Ascending aorta (tissue), 2 donors: ENCODE measurements at regions of chr1 and their contacts with region 1.

Region 1: DNA sequence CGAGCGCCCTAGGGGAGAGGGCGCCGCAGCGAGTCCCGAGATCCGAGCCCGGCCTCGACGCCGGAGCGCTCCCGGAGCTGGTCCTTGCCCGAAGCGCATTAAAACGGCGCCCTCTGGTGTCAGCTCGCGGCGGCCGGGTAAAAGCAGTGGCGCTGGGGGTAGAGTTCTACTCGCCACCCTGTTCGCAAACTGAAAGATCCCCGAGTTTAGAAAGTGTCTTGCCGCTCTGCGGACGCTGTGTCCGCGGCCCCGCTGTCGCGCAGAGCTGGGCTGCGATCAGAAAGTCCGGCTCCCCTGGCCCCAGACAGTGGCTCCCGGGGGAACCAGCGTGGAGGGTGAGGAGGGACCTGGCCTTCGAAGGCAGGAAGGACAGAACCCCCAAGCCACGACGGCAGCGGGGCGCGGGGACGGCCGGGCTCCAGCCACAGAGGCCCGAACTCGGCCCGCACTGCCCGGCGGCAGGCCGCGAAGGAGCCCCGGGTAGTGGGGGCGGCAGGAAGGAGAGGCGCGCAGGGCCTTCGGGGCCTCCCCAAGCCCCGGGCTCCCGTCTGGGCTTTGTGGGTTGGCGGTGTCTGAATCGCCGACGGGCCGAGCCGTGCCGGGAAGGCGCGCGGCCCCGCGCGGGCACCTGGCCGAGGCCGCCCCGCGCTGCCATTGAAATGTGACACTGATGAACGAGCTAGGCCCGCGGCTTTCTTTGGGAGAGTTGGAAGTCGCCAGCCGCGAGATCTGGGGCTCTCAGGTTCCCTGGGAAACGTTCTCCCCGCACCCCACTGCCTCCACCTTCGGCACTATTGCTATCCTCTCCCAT is 39.1 kb upstream of the NFIA start:
- DNase-seq: peak; percentile 38 to 94
- H3K4me3 ChIP-seq: peak overlapping the region; percentile 58 to 83
- H3K27ac ChIP-seq: peak overlapping the region; percentile 93 to 98
- H3K4me1 ChIP-seq: no peaks in the 10 kb centered on the region
- H3K27me3 ChIP-seq: no peaks in the 10 kb centered on the region
- CTCF ChIP-seq: peak; percentile 92 to 95 (median 92)

Region 2: DNA sequence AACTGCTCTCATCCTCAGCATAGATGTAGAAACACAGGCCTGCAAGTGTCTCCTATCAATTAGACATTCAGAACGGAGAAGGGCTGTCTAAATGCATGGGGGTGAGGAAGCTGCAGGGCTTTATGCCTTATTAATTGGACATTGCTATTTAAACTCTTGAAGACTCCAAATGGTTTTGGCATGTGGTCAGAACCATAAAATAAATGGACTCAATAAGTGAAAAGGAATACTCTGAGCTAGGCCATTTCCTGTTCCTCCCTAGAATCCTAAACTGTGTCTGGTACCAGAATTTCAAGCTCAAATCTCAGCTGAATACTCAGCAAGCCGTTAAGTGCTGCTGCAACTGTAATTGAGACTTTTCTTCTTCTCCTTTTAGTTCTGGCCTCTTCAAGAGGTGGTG is 889.3 kb before region 1 on chr1:
- intact Hi-C with region 1: loop called (anchors 5 kb)
- DNase-seq: no peak
- H3K4me3 ChIP-seq: no peak overlapping the region
- H3K27ac ChIP-seq: no peak overlapping the region
- H3K4me1 ChIP-seq: peaks cover 0 to 3% of the 10 kb centered on the region in 2 donors
- H3K27me3 ChIP-seq: no peaks in the 10 kb centered on the region
- CTCF ChIP-seq: no peak

Region 3: DNA sequence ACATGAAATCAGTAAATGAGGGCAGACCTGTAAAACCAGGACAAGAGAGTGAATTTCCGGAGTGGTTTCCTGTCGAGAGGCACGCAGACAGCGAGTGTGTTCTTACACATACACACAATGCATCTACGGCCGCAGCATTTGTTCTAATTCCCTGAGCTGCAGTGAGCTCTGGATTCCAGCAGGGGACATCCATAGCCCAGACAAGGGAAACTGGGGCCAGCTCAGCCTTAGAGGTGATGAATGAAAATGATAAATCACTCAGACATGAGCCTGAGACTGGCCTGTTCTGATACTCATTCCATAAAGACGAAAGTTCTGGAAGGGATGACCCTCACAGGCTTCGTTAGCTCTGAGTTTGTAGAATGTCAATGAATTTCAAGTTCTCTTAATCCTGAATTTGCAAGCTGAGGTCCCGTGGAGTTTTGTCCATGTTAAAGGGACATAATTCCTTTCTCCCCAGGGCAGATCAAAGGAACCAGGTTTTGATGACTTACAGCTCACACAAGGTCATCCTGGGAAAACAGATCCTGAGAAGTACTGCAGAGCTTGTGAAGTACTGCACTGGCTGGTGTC is 761.8 kb before region 1 on chr1:
- intact Hi-C with region 1: loop called (anchors 2 kb)
- DNase-seq: peak in 1 of 2 donors; percentile 79
- H3K4me3 ChIP-seq: no peak overlapping the region
- H3K27ac ChIP-seq: no peak overlapping the region
- H3K4me1 ChIP-seq: peaks cover 0 to 10% of the 10 kb centered on the region in 2 donors
- H3K27me3 ChIP-seq: no peaks in the 10 kb centered on the region
- CTCF ChIP-seq: peak; percentile 80 to 97 (median 96)

Region 4: GRCh38 chr1:60848583-60849188 is 194.5 kb before region 1 on chr1:
- intact Hi-C with region 1: loop called (anchors 5 kb)
- DNase-seq: no peak
- H3K4me3 ChIP-seq: no peak overlapping the region
- H3K27ac ChIP-seq: no peak overlapping the region
- H3K4me1 ChIP-seq: no peaks in the 10 kb centered on the region
- H3K27me3 ChIP-seq: no peaks in the 10 kb centered on the region
- CTCF ChIP-seq: peak in 1 of 3 experiments; percentile 40

Region 5: DNA sequence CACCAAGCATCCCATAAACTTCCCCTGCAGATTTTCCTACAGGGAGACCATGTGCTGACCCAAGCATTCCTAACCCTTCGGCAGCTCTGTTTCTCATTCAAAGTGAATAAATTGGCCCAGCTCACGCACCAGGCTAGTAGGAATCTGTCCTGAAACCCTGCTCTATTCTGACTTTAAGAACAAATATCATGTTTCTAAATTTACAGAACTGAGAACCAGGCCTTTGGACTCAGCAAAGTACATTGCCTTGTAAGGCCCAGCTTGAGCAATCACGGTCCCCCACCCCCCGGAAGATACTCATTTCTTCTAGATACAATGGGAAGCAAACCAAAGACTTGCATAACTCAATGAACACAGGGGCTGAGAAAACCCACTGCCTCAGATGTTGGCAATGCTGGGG is 120.9 kb before region 1 on chr1:
- intact Hi-C with region 1: no loop called
- DNase-seq: peak in 1 of 2 donors; percentile 75
- H3K4me3 ChIP-seq: no peak overlapping the region
- H3K27ac ChIP-seq: peak overlapping the region; percentile 36 to 58
- H3K4me1 ChIP-seq: peaks cover 2 to 18% of the 10 kb centered on the region in 2 donors
- H3K27me3 ChIP-seq: no peaks in the 10 kb centered on the region
- CTCF ChIP-seq: no peak

Region 6: DNA sequence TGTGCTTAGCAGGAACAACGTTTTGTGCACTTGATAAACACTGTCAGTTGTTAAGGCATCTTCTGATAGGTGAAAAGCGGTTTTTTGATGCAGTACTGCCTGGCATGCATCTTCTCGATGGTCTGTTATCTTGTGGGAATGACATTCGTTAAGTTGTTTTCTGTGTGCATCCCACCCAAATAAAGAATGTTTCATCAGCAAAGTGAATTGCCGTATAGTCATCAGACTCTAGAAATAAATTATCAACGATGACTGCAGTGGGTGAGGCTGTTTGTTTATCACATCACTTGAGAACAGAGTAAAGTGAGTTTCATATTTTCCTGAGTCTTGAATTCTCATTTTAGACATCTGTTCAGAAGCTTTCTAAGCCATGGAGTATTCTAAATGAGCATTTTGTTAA is 73.2 kb after region 1 on chr1:
- intact Hi-C with region 1: no loop called
- DNase-seq: no peak
- H3K4me3 ChIP-seq: peak overlapping the region in 1 of 2 donors; percentile 21
- H3K27ac ChIP-seq: peak overlapping the region; percentile 34 to 36
- H3K4me1 ChIP-seq: peaks cover 4 to 39% of the 10 kb centered on the region in 2 donors
- H3K27me3 ChIP-seq: no peaks in the 10 kb centered on the region
- CTCF ChIP-seq: no peak